Activated CD4-positive, alpha-beta memory T cell treated with anti-CD3 and anti-CD28 coated beads for 36 hours (primary cell): ENCODE measurements at regions of chr7 and their contacts with region 1.

Region 1: DNA sequence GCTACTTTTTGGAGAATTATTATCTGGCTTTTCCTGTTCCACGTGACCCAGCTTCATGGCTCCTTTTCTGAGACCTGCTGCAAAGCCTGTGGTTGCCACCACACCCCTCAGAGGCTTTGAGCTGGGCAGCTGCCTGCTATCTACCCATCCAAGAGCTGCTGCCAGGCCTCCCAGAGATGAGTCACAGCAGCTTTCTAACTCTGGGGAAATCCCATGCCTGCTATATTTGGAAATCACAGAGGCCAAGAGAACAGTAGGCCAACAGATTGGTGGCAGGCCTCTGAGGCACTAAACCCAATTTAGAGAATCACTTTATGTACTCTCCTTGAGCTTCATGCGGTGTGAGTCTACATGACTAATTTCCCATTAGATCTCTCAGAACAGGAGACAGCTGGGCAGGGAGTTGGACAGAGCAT is 35.2 kb downstream of the SGCE start:
- DNase-seq: peak; percentile 70
- H3K4me3 Mint-ChIP-seq: no peak overlapping the region
- H3K27ac Mint-ChIP-seq: no peak overlapping the region
- H3K4me1 Mint-ChIP-seq: peaks cover 10% of the 10 kb centered on the region
- H3K27me3 Mint-ChIP-seq: no peaks in the 10 kb centered on the region

Region 2: GRCh38 chr7:94423863-94424735 is 196.6 kb before region 1 on chr7:
- CTCF ChIA-PET with region 1: no interaction called
- POLR2A ChIA-PET with region 1: no interaction called
- intact Hi-C with region 1: no loop called
- DNase-seq: no peak
- H3K4me3 Mint-ChIP-seq: no peak overlapping the region
- H3K27ac Mint-ChIP-seq: no peak overlapping the region
- H3K4me1 Mint-ChIP-seq: no peaks in the 10 kb centered on the region
- H3K27me3 Mint-ChIP-seq: peaks cover 5% of the 10 kb centered on the region

Region 3: DNA sequence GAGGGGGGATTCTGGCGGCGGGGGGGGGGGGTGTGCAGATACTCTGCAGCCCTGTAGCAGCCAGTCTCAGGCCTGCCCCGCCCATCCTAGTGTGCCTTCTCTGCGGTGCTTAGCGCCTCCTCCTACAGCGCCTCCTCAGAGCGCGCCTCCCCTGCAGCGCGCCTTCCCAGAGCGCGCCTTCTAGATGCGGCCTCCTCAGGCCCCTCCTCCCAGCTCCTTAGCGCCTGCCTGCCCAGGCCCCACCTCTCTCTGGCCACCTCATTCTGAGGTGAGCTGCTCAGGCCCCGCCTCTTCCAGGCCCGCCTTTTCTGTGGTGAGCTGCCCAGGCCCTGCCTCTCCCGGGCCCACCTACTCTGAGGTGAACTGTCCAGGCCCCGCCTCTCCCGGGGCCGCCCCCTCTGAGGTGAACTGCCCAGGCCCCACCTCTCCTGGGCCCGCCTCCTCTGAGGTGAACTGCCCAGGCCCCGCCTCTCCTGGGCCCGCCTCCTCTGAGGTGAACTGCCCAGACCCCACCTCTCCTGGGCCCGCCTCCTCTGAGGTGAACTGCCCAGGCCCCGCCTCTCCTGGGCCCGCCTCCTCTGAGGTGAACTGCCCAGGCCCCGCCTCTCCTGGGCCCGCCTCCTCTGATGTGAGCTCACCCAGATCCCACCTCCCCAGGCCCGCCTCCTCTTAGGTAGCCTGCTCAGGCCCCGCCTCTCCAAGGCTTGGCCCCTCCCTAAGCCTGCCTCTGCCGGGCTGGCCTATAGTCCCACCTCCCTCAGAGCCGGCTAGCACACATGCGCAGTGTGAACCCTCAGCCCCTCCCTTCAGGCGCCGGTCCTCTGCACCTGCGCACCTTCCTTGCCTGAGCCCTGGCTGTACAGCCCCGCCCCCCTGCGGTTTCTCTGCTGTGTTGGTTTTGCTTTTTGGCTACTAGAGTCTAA is 37.3 kb after region 1 on chr7:
- CTCF ChIA-PET with region 1: interaction called, 4 read pairs
- POLR2A ChIA-PET with region 1: no interaction called
- intact Hi-C with region 1: loop called (anchors 2 kb)
- DNase-seq: peak; percentile 95
- H3K4me3 Mint-ChIP-seq: peak overlapping the region; percentile 85
- H3K27ac Mint-ChIP-seq: no peak overlapping the region
- H3K4me1 Mint-ChIP-seq: peaks cover 12% of the 10 kb centered on the region
- H3K27me3 Mint-ChIP-seq: peaks cover 16% of the 10 kb centered on the region